Naive thymus-derived CD4-positive, alpha-beta T cell (primary cell): ENCODE measurements at regions of chr11 and their contacts with region 1.

Region 1: GRCh38 chr11:14358729-14359439 is at the start of gene RRAS2:
- DNase-seq: peak; percentile 67 to 81 (median 78)
- ATAC-seq: peak; percentile 96
- H3K4me3 ChIP-seq: peak within 1 kb of the TSS; percentile 61
- H3K4me3 Mint-ChIP-seq: peak within 1 kb of the TSS; percentile 91 to 98 (median 95)
- H3K27ac ChIP-seq: peak within 1 kb of the TSS; percentile 72
- H3K27ac Mint-ChIP-seq: peak within 1 kb of the TSS; percentile 66 to 93 (median 86)
- H3K4me1 ChIP-seq: peaks cover 7 to 8% of the 10 kb centered on the region in 2 donors
- H3K4me1 Mint-ChIP-seq: peaks cover 25 to 55% (median 30%) of the 10 kb centered on the region in 7 donors
- H3K27me3 ChIP-seq: no peaks in the 10 kb centered on the region
- H3K27me3 Mint-ChIP-seq: peaks cover 0 to 6% (median 0%) of the 10 kb centered on the region in 5 donors
- total RNA-seq, gene RRAS2: 12.6 to 55.3 (median 22.2) TPM

Region 2: DNA sequence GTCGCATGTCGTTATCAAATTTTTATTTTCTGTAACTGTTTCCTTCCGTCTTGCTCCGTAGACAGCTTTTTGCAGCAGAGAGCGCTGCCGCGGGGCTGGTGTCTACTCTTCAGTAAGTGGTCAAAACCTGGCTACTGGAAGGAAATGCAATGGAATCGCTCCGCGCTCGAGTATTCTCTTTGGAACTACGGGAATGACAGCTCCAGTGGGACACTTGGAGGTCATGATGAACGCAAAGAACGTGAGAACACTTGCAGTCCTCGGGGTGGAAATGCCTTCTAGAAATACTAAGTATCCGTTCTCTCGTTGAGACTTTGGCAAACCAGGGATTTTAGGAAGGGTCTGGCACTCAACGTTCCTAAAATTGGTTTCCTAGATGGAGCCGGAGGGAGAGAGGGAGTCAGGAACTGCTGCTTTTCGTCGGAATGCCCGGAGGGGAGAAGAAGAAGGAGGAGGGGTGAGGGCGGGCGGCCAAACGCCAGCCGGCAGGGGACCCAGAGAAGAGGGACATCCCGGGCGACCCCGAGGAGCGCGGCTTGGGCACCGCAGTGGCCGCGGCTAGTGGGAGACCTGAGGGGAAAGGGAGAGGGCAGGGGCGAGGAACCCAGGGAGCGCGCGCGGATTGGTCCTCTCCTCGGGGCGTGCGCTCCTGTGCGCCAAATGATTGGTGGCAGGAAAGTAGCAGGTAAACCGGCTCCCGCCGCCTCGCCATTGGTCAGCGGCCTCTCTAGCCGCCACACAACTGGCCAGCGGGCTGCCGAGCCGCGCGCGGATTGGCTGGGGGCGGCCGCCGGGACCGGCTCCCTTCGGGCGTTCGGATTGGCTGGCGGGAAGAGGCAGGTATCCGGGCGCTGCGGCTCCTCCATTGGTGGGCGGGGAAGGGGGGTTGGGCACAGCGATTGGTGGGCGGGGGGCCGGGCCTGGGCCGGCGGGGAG is 1081.8 kb before region 1 on chr11:
- CTCF ChIA-PET with region 1: no interaction called
- POLR2A ChIA-PET with region 1: no interaction called
- intact Hi-C with region 1: loop called in 1 of 2 experiments (anchors 5 kb)
- DNase-seq: peak; percentile 93 to 97 (median 96)
- ATAC-seq: peak; percentile 91
- H3K4me3 ChIP-seq: peak overlapping the region; percentile 80
- H3K4me3 Mint-ChIP-seq: peak overlapping the region; percentile 95 to 99 (median 97)
- H3K27ac ChIP-seq: peak overlapping the region; percentile 81
- H3K27ac Mint-ChIP-seq: peak overlapping the region; percentile 72 to 97 (median 91)
- H3K4me1 ChIP-seq: peaks cover 19 to 29% of the 10 kb centered on the region in 2 donors
- H3K4me1 Mint-ChIP-seq: peaks cover 32 to 47% (median 40%) of the 10 kb centered on the region in 7 donors
- H3K27me3 ChIP-seq: no peaks in the 10 kb centered on the region
- H3K27me3 Mint-ChIP-seq: peaks cover 0 to 51% (median 0%) of the 10 kb centered on the region in 5 donors

Region 3: GRCh38 chr11:14300661-14301304 is 58.1 kb before region 1 on chr11:
- CTCF ChIA-PET with region 1: no interaction called
- POLR2A ChIA-PET with region 1: no interaction called
- intact Hi-C with region 1: loop called in 1 of 2 experiments (anchors 5 kb)
- DNase-seq: peak in 7 of 9 donors; percentile 19 to 47 (median 26)
- ATAC-seq: peak; percentile 88
- H3K4me3 ChIP-seq: no peak overlapping the region
- H3K4me3 Mint-ChIP-seq: no peak overlapping the region
- H3K27ac ChIP-seq: no peak overlapping the region
- H3K27ac Mint-ChIP-seq: no peak overlapping the region
- H3K4me1 ChIP-seq: no peaks in the 10 kb centered on the region
- H3K4me1 Mint-ChIP-seq: peaks cover 0 to 35% (median 0%) of the 10 kb centered on the region in 7 donors
- H3K27me3 ChIP-seq: no peaks in the 10 kb centered on the region
- H3K27me3 Mint-ChIP-seq: no peaks in the 10 kb centered on the region

Region 4: DNA sequence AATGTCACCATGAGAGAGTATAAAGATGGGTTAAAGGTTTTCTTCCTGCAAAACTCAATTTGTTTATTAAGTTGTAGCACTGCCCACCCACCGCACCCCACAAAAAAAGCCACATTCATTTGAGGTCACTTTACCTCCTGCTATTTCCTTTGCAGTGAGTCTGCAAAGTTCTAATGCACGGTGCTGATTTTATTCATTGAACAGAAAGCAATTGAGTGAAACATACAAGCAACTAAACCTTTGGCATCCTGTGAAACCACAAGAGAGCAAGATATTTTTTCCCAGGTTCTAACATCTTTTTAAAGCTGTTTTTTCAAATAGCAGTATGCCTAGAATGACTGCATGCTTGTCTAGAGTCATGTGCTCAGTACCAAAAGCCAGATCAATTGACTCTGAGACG is 38.9 kb before region 1 on chr11:
- CTCF ChIA-PET with region 1: no interaction called
- POLR2A ChIA-PET with region 1: no interaction called
- intact Hi-C with region 1: loop called in 1 of 2 experiments (anchors 1 kb)
- DNase-seq: peak in 7 of 9 donors; percentile 24 to 65 (median 47)
- ATAC-seq: peak; percentile 82
- H3K4me3 ChIP-seq: peak overlapping the region; percentile 15
- H3K4me3 Mint-ChIP-seq: peak overlapping the region in 9 of 10 donors; percentile 2 to 67 (median 42)
- H3K27ac ChIP-seq: no peak overlapping the region
- H3K27ac Mint-ChIP-seq: peak overlapping the region in 4 of 9 donors; percentile 28 to 50 (median 48)
- H3K4me1 ChIP-seq: peaks cover 14 to 38% of the 10 kb centered on the region in 2 donors
- H3K4me1 Mint-ChIP-seq: peaks cover 8 to 72% (median 34%) of the 10 kb centered on the region in 7 donors
- H3K27me3 ChIP-seq: no peaks in the 10 kb centered on the region
- H3K27me3 Mint-ChIP-seq: no peaks in the 10 kb centered on the region

Region 5: GRCh38 chr11:14336507-14337503 is 22.1 kb before region 1 on chr11:
- CTCF ChIA-PET with region 1: no interaction called
- POLR2A ChIA-PET with region 1: no interaction called
- intact Hi-C with region 1: no loop called
- DNase-seq: no peak
- ATAC-seq: peak; percentile 57
- H3K4me3 ChIP-seq: no peak overlapping the region
- H3K4me3 Mint-ChIP-seq: peak overlapping the region in 2 of 10 donors; percentile 12 to 19
- H3K27ac ChIP-seq: no peak overlapping the region
- H3K27ac Mint-ChIP-seq: peak overlapping the region in 2 of 9 donors; percentile 20 to 74
- H3K4me1 ChIP-seq: peaks cover 0 to 4% of the 10 kb centered on the region in 2 donors
- H3K4me1 Mint-ChIP-seq: peaks cover 15 to 50% (median 27%) of the 10 kb centered on the region in 7 donors
- H3K27me3 ChIP-seq: no peaks in the 10 kb centered on the region
- H3K27me3 Mint-ChIP-seq: no peaks in the 10 kb centered on the region

Region 6: GRCh38 chr11:14413307-14414069 is 54.6 kb after region 1 on chr11:
- CTCF ChIA-PET with region 1: no interaction called
- POLR2A ChIA-PET with region 1: no interaction called
- intact Hi-C with region 1: loop called in 1 of 2 experiments (anchors 2 kb)
- DNase-seq: no peak
- ATAC-seq: no peak
- H3K4me3 ChIP-seq: no peak overlapping the region
- H3K4me3 Mint-ChIP-seq: no peak overlapping the region
- H3K27ac ChIP-seq: no peak overlapping the region
- H3K27ac Mint-ChIP-seq: peak overlapping the region in 2 of 9 donors; percentile 39 to 87
- H3K4me1 ChIP-seq: peaks cover 12 to 30% of the 10 kb centered on the region in 2 donors
- H3K4me1 Mint-ChIP-seq: peaks cover 12 to 69% (median 25%) of the 10 kb centered on the region in 7 donors
- H3K27me3 ChIP-seq: no peaks in the 10 kb centered on the region
- H3K27me3 Mint-ChIP-seq: no peaks in the 10 kb centered on the region

Region 7: DNA sequence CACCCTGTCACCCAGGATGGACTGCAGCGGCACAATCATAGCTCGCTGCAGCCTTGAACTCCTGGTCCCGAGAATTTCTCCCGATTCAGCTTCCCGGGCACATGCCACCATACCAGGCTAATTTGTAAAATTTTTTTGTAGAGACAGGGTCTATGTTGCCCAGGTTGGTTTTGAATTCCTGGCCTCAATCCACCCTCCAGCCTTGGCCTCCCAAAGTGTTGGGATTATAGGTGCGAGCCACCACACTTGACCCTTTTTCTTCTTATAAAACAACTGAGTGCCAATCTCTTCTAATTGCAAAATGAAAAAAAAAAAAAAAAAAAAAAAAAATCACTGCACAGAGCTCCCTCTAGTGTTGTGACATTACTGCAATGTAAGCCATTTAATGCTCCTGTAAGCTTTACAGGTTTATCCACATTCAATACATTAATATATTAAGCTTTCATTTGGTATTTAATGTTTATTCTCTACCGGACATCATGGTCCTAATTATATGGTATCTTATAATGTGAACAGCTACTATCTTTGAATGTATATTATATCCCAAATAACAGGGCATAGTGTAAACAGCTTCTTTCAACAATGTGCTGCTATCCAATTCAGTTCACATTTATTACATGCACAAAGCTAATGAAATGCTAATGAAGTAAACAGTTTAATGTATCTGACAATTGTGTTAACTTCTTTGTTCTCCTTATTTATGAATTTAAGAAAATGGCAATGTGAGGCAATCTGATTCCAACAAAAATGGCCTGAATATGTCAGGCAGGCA is 96.2 kb after region 1 on chr11:
- CTCF ChIA-PET with region 1: no interaction called
- POLR2A ChIA-PET with region 1: interaction called, 3 read pairs
- intact Hi-C with region 1: loop called (anchors 5 to 10 kb)
- DNase-seq: peak in 5 of 9 donors; percentile 4 to 22 (median 12)
- ATAC-seq: peak; percentile 67
- H3K4me3 ChIP-seq: no peak overlapping the region
- H3K4me3 Mint-ChIP-seq: no peak overlapping the region
- H3K27ac ChIP-seq: no peak overlapping the region
- H3K27ac Mint-ChIP-seq: peak overlapping the region in 4 of 9 donors; percentile 1 to 52 (median 46)
- H3K4me1 ChIP-seq: peaks cover 0 to 3% of the 10 kb centered on the region in 2 donors
- H3K4me1 Mint-ChIP-seq: peaks cover 0 to 10% (median 0%) of the 10 kb centered on the region in 7 donors
- H3K27me3 ChIP-seq: no peaks in the 10 kb centered on the region
- H3K27me3 Mint-ChIP-seq: no peaks in the 10 kb centered on the region

Region 8: DNA sequence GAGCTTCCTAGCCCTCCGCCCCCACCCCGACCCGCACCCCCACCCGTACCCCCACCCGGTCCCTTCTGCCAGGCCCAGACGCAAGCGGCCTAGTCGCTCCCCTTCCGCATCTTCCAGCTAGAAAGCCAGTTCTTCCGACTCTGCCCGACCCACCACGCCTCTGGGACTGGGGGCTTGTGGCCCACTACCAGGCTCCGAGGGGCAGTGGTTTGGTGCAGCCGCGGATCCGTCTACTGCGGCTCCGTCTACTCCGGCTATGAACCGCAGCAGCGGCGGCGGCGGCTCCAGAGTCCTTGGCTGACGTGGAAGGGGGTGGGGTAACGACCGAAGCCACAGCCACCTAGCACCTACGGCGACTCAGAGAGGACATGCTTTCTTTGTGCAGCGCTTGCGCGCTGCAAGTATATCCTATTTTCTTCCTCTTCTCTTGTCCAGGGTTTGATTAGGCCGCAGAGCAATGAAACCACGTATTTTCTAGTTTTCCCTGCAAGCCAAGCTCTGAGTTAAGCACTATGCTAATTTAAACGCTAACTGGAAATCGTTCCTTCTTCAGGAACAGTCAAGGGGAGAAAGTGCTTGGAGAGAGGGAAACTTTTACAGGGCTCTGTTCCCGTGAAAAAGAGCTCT is 140.8 kb after region 1 on chr11 and contains the start of gene COPB1:
- CTCF ChIA-PET with region 1: no interaction called
- POLR2A ChIA-PET with region 1: no interaction called
- intact Hi-C with region 1: loop called in 1 of 2 experiments (anchors 1 kb)
- DNase-seq: peak; percentile 82 to 94 (median 92)
- ATAC-seq: peak; percentile 99
- H3K4me3 ChIP-seq: peak within 1 kb of the TSS; percentile 70
- H3K4me3 Mint-ChIP-seq: peak within 1 kb of the TSS; percentile 79 to 98 (median 92)
- H3K27ac ChIP-seq: peak within 1 kb of the TSS; percentile 91
- H3K27ac Mint-ChIP-seq: peak within 1 kb of the TSS; percentile 87 to 98 (median 94)
- H3K4me1 ChIP-seq: peaks cover 0 to 21% of the 10 kb centered on the region in 2 donors
- H3K4me1 Mint-ChIP-seq: peaks cover 27 to 54% (median 47%) of the 10 kb centered on the region in 7 donors
- H3K27me3 ChIP-seq: no peaks in the 10 kb centered on the region
- H3K27me3 Mint-ChIP-seq: no peaks in the 10 kb centered on the region
- total RNA-seq, gene COPB1: 73.4 to 102 (median 75.9) TPM